ENCODE measurements at regions of chr13 and their contacts with region 1.

Region 1: DNA sequence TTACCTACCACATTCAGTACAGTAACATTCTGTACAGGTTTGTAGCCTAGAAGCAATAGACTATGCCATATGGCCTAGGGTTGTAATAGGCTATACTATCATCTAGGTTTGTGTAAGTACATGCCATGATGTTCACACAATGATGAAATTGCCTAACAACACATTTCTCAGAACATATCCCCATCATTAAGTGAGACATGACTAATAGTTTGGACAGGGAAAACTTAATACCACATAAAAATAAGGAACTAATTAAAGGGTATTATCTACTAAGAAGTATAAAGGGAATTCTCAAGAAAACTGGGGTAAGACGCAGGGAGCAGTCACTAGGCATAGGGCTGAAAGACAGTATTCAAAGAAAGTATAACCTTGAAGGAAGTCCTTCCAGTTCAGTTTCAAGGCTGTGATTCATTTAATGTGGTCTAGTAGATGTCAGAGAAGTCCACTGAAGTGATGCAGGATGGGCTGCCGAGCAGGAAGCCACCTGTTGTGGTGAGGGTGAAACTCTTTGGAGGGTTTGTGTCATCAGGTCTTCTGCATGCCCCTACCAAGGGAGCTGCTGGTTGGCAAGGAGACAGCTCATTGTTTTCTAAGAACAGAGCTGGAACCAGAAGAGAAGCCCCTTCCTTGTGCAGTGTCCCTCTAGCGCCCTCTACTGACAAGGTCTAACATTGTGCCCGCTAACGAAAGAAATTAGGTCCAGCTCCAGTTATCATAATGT is 122.9 kb downstream of the OLFM4 start:
- DNase-seq: peak; percentile 54
- H3K4me3 ChIP-seq: peak overlapping the region in 1 of 2 experiments; percentile 51; a peak in 1 of 4 replicates
- H3K27ac ChIP-seq: no peak overlapping the region
- H3K4me1 ChIP-seq: no peaks in the 10 kb centered on the region; a peak in 1 of 4 replicates
- H3K27me3 ChIP-seq: no peaks in the 10 kb centered on the region
- CTCF ChIP-seq: peak; percentile 82
- EP300 ChIP-seq: no peak
- RAD21 ChIP-seq: peak; percentile 89

Region 2: DNA sequence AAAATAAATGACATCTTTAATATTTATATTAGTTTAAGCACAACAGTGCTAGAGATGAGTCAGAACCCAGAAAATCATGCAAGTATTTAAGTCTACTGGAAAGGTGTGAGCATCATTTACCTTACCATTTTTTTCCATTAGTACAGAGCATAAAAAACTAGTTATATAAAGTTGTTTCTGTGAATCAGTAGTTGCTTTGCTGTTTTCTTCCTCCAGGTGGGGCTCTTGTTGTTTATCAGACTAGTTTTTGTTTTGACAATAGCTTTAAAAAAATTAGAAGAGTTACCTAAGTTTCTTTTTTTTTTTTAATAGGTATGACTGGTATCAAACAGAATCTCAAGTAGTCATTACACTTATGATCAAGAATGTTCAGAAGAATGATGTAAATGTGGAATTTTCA is 486.2 kb before region 1 on chr13:
- CTCF ChIA-PET with region 1: interaction called, 15 read pairs
- POLR2A ChIA-PET with region 1: no interaction called
- DNase-seq: peak; percentile 22
- H3K4me3 ChIP-seq: no peak overlapping the region
- H3K27ac ChIP-seq: no peak overlapping the region
- H3K4me1 ChIP-seq: no peaks in the 10 kb centered on the region; a peak in 1 of 4 replicates
- H3K27me3 ChIP-seq: no peaks in the 10 kb centered on the region
- CTCF ChIP-seq: peak; percentile 67
- EP300 ChIP-seq: no peak
- RAD21 ChIP-seq: peak; percentile 59

Region 3: GRCh38 chr13:52868190-52868589 is 283.3 kb before region 1 on chr13:
- CTCF ChIA-PET with region 1: interaction called, 16 read pairs
- POLR2A ChIA-PET with region 1: no interaction called
- DNase-seq: no peak
- H3K4me3 ChIP-seq: no peak overlapping the region
- H3K27ac ChIP-seq: no peak overlapping the region
- H3K4me1 ChIP-seq: no peaks in the 10 kb centered on the region
- H3K27me3 ChIP-seq: no peaks in the 10 kb centered on the region
- CTCF ChIP-seq: no peak
- EP300 ChIP-seq: no peak
- RAD21 ChIP-seq: no peak

Region 4: DNA sequence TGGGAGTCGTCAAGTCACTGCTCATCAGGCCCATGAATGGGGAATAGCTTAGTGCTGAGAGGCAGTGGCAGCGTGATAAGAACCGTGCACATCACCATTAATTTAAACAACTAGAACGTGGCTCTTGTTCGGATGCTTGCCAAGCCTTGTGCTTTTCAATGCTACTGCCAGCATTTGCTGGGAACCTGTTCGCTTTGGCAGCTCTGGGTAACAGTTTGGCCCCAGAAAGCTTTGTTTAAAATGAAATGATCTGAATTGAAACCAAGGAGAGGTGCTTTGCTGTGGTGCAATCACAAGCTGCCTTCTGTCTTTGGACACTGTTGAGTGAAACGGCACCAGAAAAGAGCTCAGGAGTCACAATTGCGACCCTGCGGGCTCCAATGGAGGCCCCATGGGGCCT is 176.3 kb before region 1 on chr13:
- CTCF ChIA-PET with region 1: interaction called, 128 read pairs
- POLR2A ChIA-PET with region 1: no interaction called
- DNase-seq: no peak
- H3K4me3 ChIP-seq: no peak overlapping the region
- H3K27ac ChIP-seq: no peak overlapping the region
- H3K4me1 ChIP-seq: no peaks in the 10 kb centered on the region
- H3K27me3 ChIP-seq: no peaks in the 10 kb centered on the region
- CTCF ChIP-seq: no peak
- EP300 ChIP-seq: no peak
- RAD21 ChIP-seq: no peak

Region 5: DNA sequence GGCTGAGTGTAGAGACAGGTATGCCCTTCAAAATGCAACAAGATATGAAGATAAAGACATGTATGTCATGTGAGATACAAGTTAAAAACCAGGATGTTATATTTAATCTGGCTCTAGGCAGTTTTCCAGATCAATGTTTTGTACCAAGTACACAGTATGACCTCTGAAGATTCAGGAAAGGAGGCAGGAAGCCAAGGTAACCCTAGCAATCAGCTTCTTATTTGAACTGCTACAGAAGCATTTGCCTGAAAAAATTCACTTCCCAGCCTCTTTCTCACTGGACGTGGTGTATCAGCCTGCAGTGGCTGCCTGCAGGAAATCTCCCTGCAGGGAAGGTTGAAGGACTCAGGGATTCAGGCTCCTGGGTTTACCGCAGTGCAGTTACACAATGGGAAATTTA is 98.8 kb before region 1 on chr13:
- CTCF ChIA-PET with region 1: interaction called, 15 read pairs
- POLR2A ChIA-PET with region 1: no interaction called
- DNase-seq: no peak
- H3K4me3 ChIP-seq: no peak overlapping the region
- H3K27ac ChIP-seq: no peak overlapping the region
- H3K4me1 ChIP-seq: no peaks in the 10 kb centered on the region; a peak in 1 of 4 replicates
- H3K27me3 ChIP-seq: no peaks in the 10 kb centered on the region
- CTCF ChIP-seq: no peak
- EP300 ChIP-seq: no peak
- RAD21 ChIP-seq: no peak

Region 6: DNA sequence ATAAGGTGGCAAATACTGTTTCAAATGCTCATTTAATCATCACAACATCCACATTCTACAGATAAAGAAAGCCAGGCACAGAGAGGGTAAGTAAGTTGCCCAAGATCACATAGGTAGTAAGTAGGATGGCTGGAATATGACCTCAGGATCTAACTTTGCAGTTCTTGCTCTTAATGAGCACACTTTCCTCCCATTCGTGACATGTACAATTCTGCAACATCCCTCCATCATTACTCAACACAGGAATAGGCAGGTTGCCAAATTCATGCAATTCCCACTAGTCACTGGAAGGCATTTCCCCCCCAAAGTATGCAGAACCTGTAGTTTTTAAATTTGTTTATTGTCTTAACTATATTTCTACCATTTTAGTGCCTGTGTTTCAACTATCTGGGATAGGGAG is 13.7 kb before region 1 on chr13:
- CTCF ChIA-PET with region 1: interaction called, 46 read pairs
- POLR2A ChIA-PET with region 1: no interaction called
- DNase-seq: no peak
- H3K4me3 ChIP-seq: no peak overlapping the region
- H3K27ac ChIP-seq: no peak overlapping the region
- H3K4me1 ChIP-seq: no peaks in the 10 kb centered on the region; a peak in 1 of 4 replicates
- H3K27me3 ChIP-seq: no peaks in the 10 kb centered on the region
- CTCF ChIP-seq: no peak
- EP300 ChIP-seq: no peak
- RAD21 ChIP-seq: no peak

Region 7: DNA sequence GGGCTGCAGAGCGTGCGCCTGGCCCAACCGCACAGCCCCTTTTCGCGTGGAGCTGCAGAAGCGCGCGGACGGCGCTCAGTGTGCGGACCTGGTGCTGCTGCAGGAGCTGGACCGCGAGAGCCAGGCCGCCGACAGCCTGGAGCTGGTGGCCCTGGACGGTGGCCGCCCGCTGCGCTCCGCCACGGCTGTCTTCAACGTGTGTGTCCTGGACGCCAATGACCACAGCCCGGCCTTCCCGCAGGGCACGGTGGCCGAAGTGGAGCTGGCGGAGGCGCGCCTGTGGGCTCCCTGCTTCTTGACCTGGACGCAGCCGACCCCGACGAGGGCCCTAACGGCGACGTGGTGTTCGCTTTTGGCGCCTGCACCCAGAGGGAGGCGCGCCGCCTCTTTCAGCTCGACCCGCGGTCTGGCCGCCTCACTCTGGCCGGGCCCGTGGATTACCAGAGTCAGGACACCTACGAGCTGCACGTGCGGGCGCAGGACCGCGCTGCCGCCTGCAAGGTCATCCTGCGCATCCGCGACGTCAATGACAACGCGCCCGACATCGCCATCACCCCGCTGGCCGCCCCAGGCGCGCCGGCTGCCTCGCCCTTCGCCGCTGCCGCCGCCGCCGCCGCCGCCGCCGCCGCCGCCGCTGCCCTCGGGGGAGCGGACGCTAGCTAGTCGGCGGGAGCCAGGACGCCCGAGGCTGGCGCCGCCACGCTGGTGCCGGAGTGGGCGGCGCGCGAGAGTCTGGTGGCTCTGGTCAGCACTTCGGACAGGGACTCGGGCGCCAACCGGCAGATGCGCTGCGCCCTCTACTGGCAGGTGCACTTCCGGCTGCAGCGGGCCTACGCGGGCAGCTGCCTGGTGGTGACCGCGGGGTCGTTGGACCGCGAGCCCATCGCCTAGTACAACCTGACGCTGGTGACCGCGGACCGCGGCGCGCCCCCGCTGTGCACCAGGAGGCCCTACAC is 49.3 kb after region 1 on chr13:
- CTCF ChIA-PET with region 1: interaction called, 17 read pairs
- POLR2A ChIA-PET with region 1: no interaction called
- DNase-seq: peak; percentile 44
- H3K4me3 ChIP-seq: no peak overlapping the region; a peak in 1 of 4 replicates
- H3K27ac ChIP-seq: no peak overlapping the region
- H3K4me1 ChIP-seq: no peaks in the 10 kb centered on the region; a peak in 2 of 4 replicates
- H3K27me3 ChIP-seq: no peaks in the 10 kb centered on the region
- CTCF ChIP-seq: no peak; the same call in 1 of the 2 replicates
- EP300 ChIP-seq: no peak
- RAD21 ChIP-seq: no peak

Region 8: DNA sequence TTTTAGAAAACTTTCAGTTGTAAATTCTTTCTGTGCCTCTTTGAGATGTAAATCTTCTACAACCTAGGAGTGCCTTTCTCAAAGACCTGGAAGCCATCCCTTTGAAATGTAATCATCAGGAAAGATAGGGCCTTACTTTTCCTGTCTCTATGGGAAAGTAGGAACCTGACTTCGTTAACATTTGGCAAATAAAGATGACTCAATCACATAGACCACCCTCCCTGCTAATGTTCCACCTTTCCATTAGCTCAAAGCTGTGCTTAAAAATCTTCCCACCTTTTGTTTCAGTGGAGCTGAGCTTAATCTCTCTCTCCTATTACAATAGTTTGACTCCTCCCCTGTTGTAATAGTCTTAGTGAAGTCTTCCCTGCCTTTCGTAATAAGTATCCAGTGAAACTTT is 124.8 kb after region 1 on chr13:
- CTCF ChIA-PET with region 1: no interaction called
- POLR2A ChIA-PET with region 1: no interaction called
- DNase-seq: no peak
- H3K4me3 ChIP-seq: no peak overlapping the region
- H3K27ac ChIP-seq: no peak overlapping the region
- H3K4me1 ChIP-seq: no peaks in the 10 kb centered on the region
- H3K27me3 ChIP-seq: no peaks in the 10 kb centered on the region
- CTCF ChIP-seq: no peak
- EP300 ChIP-seq: no peak
- RAD21 ChIP-seq: no peak